HEK293 (cell line): ENCODE measurements at regions of chr12 and their contacts with region 1.

Region 1: GRCh38 chr12:109597795-109598427 is 24.3 kb downstream of the MVK start:
- H3K4me3 ChIP-seq: no peak overlapping the region
- H3K27ac ChIP-seq: no peak overlapping the region
- H3K4me1 ChIP-seq: no peaks in the 10 kb centered on the region
- CTCF ChIP-seq: peak; percentile 91

Region 2: DNA sequence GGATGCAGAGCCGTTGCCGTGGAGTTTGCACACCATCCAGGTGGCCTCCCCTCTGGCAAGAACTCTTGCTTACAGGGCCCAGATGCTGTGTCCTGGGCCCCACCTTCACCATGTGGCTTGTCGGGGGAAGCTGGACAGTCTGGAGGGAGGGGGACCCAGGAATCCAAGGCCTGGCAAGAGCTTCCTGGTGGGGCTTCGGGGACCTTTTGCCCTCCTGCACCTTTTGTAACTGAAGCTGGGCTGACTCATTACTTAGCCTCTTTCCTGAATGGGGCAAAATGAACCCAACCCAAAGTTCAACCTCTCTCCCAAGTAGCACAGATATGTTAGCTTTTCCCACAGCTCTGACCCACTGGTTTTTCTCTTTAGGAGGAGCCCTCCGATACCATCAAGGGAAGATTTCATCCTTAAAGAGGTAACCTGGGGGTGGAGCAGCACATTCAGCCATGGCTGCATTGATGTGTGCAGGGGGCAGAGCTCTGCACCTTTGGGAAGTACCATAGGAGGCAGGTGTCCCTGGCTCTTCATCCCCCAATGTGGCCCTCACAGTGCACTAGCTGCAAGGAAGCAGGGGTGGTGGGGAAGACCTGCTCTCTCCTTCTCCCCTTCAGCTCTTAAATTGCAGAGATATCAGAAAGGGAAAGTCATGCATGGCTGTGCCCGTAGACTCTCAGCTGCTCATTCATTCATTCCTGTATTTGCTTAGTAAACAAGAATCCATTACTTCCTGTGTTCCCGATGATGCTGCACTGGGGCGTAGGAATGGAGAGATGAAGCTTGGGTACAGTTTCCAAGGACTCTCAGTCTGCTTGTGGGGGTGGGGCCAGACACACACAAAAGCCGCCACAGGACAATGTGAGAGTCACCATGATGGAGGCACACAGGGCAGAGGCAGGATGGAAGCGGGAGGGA is 11.3 kb before region 1 on chr12:
- CTCF ChIA-PET with region 1: interaction called, 16 read pairs
- POLR2A ChIA-PET with region 1: interaction called, 3 read pairs
- H3K4me3 ChIP-seq: no peak overlapping the region
- H3K27ac ChIP-seq: no peak overlapping the region
- H3K4me1 ChIP-seq: no peaks in the 10 kb centered on the region
- CTCF ChIP-seq: no peak

Region 3: DNA sequence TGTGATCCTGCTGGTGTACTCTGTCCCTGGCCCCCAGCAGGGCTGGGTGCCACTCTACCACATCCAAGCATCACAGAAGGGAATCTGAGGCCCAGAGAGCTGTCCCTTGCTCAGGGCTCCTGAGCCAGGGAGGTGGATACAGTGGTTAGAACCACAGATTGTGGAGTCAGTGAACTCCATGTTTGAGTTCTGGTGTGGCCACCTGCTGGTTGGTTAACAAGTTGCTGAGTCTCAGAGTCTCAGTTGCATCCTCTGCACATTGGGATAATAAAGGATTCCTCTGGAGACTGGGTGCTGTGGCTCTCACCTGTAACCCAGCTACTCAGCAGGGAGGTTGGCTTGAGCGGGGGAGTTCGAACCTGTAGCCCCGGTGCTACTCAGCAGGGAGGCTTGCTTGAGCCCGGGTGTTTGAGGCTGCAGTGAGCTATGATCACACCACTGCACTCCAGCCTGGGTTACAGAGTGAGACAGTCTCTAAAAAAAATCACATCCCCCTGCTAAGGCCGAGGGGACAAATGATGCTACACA is 15.1 kb after region 1 on chr12:
- CTCF ChIA-PET with region 1: interaction called, 12 read pairs
- POLR2A ChIA-PET with region 1: no interaction called
- H3K4me3 ChIP-seq: no peak overlapping the region
- H3K27ac ChIP-seq: no peak overlapping the region
- H3K4me1 ChIP-seq: no peaks in the 10 kb centered on the region
- CTCF ChIP-seq: no peak; the same call in 1 of the 2 replicates

Region 4: GRCh38 chr12:109673884-109674283 is 76.0 kb after region 1 on chr12:
- CTCF ChIA-PET with region 1: interaction called, 10 read pairs
- POLR2A ChIA-PET with region 1: no interaction called
- H3K4me3 ChIP-seq: no peak overlapping the region
- H3K27ac ChIP-seq: no peak overlapping the region
- H3K4me1 ChIP-seq: peaks cover 4% of the 10 kb centered on the region
- CTCF ChIP-seq: no peak

Region 5: DNA sequence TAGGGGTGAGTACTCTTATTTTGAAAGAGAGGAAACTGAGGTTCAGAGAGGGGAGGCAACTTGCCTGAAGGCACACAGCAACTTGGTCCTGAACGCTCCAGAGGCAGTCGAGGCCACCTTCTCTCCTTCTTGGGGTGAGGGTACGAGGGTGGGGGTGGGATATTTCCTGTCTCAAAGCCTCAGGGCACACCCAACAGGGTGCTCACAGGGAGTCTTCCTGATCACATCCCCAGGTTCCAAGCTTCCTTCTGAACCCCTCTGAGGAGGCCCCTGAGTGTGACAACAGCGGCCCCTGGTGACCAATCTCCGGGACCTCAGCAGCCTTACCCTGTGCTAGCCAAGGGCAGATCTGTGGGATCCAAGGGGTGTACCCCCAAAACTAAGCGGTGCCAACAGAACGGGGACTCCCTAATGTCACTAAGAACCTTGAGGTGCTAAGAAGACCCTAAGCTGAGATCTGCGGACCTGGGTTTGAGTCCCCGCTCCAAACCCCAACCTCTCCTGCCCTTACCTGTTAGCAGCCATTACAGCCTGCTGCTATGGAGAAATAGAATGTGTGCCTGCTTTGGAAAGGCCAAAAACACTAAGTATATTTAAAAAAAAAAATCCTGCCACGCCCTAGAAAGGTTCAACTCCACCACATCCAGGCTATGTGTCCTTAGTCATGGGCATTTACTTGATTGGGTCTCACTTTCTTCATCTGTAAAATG is 177.4 kb after region 1 on chr12:
- CTCF ChIA-PET with region 1: interaction called, 83 read pairs
- POLR2A ChIA-PET with region 1: interaction called, 5 read pairs
- H3K4me3 ChIP-seq: no peak overlapping the region
- H3K27ac ChIP-seq: no peak overlapping the region
- H3K4me1 ChIP-seq: no peaks in the 10 kb centered on the region
- CTCF ChIP-seq: peak; percentile 60